ENCODE measurements at regions of chr12 and their contacts with region 1.

Region 1: DNA sequence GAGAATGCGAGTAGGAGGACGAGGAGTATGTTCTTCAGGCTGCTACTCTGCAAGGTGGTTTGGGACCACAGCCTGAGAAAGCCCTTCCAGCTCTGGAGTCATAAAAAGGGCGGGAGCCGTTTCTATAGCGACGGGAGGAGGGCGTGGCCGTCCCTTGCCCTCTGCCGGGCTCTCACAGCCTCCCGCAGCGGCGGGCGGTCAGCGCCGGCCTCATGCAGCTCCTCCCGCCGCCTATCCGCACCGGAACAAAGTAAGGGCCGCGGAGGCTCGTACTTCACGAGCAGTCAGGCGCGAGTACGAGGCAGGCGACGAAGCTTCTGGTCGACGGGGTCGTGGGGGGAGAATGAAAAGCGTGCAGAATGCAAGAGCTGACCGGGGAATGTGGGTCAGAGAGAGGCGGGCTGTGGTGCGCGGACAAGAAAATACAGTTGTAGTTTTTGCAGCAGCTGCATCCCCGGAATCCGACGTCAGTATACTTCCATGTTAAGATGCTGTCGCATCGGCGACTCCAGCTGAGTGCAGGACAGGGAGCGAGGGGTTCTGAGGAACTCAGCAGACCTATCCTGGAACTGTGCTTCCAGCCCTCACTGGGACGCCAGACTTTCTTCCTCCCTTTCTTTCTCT is at the start of gene DYRK4:
- DNase-seq: peak; percentile 72 to 93
- H3K4me3 ChIP-seq: peak within 1 kb of the TSS; percentile 21 to 56 (median 44); a peak in 7 of 8 replicates
- H3K27ac ChIP-seq: no peak within 1 kb of the TSS
- H3K4me1 ChIP-seq: peaks cover 2 to 6% (median 4%) of the 10 kb centered on the region in 4 experiments
- H3K27me3 ChIP-seq: peaks cover 1 to 15% (median 14%) of the 10 kb centered on the region in 4 experiments
- CTCF ChIP-seq: no peak
- EP300 ChIP-seq: peak in 1 of 2 experiments; percentile 61; a peak in 1 of 3 replicates
- POLR2A ChIP-seq: peak in 1 of 2 experiments; percentile 88; a peak in 2 of 3 replicates
- RAD21 ChIP-seq: peak in 1 of 2 experiments; percentile 20; a peak in 1 of 4 replicates
- total RNA-seq, gene DYRK4: 9.7 and 10.5 TPM in 2 replicates

Region 2: GRCh38 chr12:4538207-4539160 is 23.7 kb before region 1 on chr12 and contains the start of gene RAD51AP1:
- CTCF ChIA-PET with region 1: no interaction called
- POLR2A ChIA-PET with region 1: interaction called, 10 read pairs
- DNase-seq: peak; percentile 91 to 93
- H3K4me3 ChIP-seq: peak within 1 kb of the TSS; percentile 82 to 100 (median 90)
- H3K27ac ChIP-seq: peak within 1 kb of the TSS; percentile 99
- H3K4me1 ChIP-seq: peaks cover 0 to 6% (median 2%) of the 10 kb centered on the region in 4 experiments; a peak in 4 of 7 replicates
- H3K27me3 ChIP-seq: no peaks in the 10 kb centered on the region
- CTCF ChIP-seq: no peak
- EP300 ChIP-seq: peak in 1 of 2 experiments; percentile 97; a peak in 2 of 3 replicates
- POLR2A ChIP-seq: peak; percentile 61 to 87
- RAD21 ChIP-seq: no peak
- total RNA-seq, gene RAD51AP1: 42.4 and 48.3 TPM in 2 replicates